CD4-positive, alpha-beta T cell (primary cell): ENCODE measurements at regions of chr2 and their contacts with region 1.

Region 1: GRCh38 chr2:222860740-222861410 is at the start of gene ACSL3:
- DNase-seq: peak; percentile 82 to 94 (median 89)
- ATAC-seq: peak; percentile 98
- H3K4me3 ChIP-seq: peak within 1 kb of the TSS; percentile 76
- H3K4me3 Mint-ChIP-seq: peak within 1 kb of the TSS; percentile 88
- H3K27ac ChIP-seq: peak within 1 kb of the TSS in 1 of 2 donors; percentile 72
- H3K27ac Mint-ChIP-seq: peak within 1 kb of the TSS; percentile 74
- H3K4me1 ChIP-seq: peaks cover 17% of the 10 kb centered on the region
- H3K4me1 Mint-ChIP-seq: peaks cover 13% of the 10 kb centered on the region
- H3K27me3 ChIP-seq: no peaks in the 10 kb centered on the region
- H3K27me3 Mint-ChIP-seq: no peaks in the 10 kb centered on the region
- CTCF ChIP-seq: no peak
- total RNA-seq, gene ACSL3: 65.5 to 66.6 TPM

Region 2: GRCh38 chr2:222655787-222656525 is 204.9 kb before region 1 on chr2 and contains the start of gene FARSB:
- CTCF ChIA-PET with region 1: no interaction called
- POLR2A ChIA-PET with region 1: no interaction called
- intact Hi-C with region 1: loop called in 1 of 2 experiments (anchors 2 kb)
- DNase-seq: peak; percentile 85 to 99 (median 92)
- ATAC-seq: peak; percentile 90
- H3K4me3 ChIP-seq: peak within 1 kb of the TSS; percentile 83
- H3K4me3 Mint-ChIP-seq: peak within 1 kb of the TSS; percentile 96
- H3K27ac ChIP-seq: peak within 1 kb of the TSS; percentile 94 to 99
- H3K27ac Mint-ChIP-seq: peak within 1 kb of the TSS; percentile 99
- H3K4me1 ChIP-seq: peaks cover 28% of the 10 kb centered on the region
- H3K4me1 Mint-ChIP-seq: peaks cover 57% of the 10 kb centered on the region
- H3K27me3 ChIP-seq: no peaks in the 10 kb centered on the region
- H3K27me3 Mint-ChIP-seq: no peaks in the 10 kb centered on the region
- CTCF ChIP-seq: no peak
- total RNA-seq, gene FARSB: 7.8 to 8.7 TPM

Region 3: GRCh38 chr2:222884114-222884771 is 23.4 kb after region 1 on chr2:
- CTCF ChIA-PET with region 1: no interaction called
- POLR2A ChIA-PET with region 1: no interaction called
- intact Hi-C with region 1: no loop called
- DNase-seq: no peak
- ATAC-seq: no peak
- H3K4me3 ChIP-seq: no peak overlapping the region
- H3K4me3 Mint-ChIP-seq: no peak overlapping the region
- H3K27ac ChIP-seq: no peak overlapping the region
- H3K27ac Mint-ChIP-seq: no peak overlapping the region
- H3K4me1 ChIP-seq: no peaks in the 10 kb centered on the region
- H3K4me1 Mint-ChIP-seq: peaks cover 35% of the 10 kb centered on the region
- H3K27me3 ChIP-seq: no peaks in the 10 kb centered on the region
- H3K27me3 Mint-ChIP-seq: no peaks in the 10 kb centered on the region
- CTCF ChIP-seq: no peak